Mammary epithelial cell (primary cell): ENCODE measurements at regions of chr10 and their contacts with region 1.

Region 1: DNA sequence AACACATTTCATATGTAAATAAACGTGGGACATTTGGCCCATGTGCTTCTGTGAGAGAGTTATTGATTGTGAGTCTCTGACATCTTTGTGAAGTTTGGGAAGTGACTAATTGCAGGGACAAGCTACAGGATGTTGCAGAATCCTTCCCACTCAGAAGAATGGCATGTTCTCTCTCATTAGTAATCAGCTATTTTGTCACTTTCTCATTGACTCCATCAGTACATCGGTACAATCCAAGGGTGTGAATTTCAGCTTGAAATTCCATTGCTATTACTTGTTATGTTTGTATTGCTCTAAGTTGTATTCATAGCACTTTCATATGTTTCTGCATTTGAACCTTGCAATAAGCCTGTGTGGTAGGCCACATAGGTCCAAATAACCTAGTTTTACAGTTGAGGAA is 100.0 kb upstream of the KCNMA1 start:
- DNase-seq: peak; percentile 95
- H3K4me3 ChIP-seq: no peak overlapping the region
- H3K27ac ChIP-seq: peak overlapping the region; percentile 96
- H3K4me1 ChIP-seq: peaks cover 17% of the 10 kb centered on the region
- H3K27me3 ChIP-seq: no peaks in the 10 kb centered on the region
- CTCF ChIP-seq: no peak

Region 2: GRCh38 chr10:76743169-76743568 is 994.4 kb before region 1 on chr10:
- CTCF ChIA-PET with region 1: no interaction called
- dilution Hi-C with region 1: no loop called
- in situ Hi-C with region 1: no loop called
- intact Hi-C with region 1: no loop called
- DNase-seq: no peak
- H3K4me3 ChIP-seq: no peak overlapping the region
- H3K27ac ChIP-seq: no peak overlapping the region
- H3K4me1 ChIP-seq: no peaks in the 10 kb centered on the region
- H3K27me3 ChIP-seq: peaks cover 5% of the 10 kb centered on the region
- CTCF ChIP-seq: no peak

Region 3: GRCh38 chr10:77673101-77673500 is 64.5 kb before region 1 on chr10:
- CTCF ChIA-PET with region 1: no interaction called
- dilution Hi-C with region 1: no loop called
- in situ Hi-C with region 1: no loop called
- intact Hi-C with region 1: no loop called
- DNase-seq: peak; percentile 29
- H3K4me3 ChIP-seq: no peak overlapping the region
- H3K27ac ChIP-seq: no peak overlapping the region
- H3K4me1 ChIP-seq: no peaks in the 10 kb centered on the region
- H3K27me3 ChIP-seq: no peaks in the 10 kb centered on the region
- CTCF ChIP-seq: no peak

Region 4: DNA sequence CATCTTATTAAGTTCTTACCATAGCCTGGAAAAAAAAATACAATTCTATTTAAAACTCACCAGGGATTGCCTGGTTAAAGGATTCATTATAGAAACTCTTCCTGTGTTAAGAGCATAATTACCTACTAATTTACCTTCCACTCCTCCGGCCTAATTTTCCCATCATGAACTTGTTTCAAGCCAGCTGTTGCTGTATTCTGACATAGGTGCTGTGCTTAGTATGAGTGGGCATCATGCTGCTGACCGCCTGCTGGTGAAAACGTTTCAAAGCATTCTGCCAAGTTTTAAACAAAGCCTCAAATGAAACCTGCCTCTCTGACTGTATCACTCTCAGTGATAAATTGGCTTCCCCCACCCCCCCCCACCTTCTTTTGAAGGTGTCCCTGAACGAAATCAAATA is 52.2 kb before region 1 on chr10:
- CTCF ChIA-PET with region 1: no interaction called
- dilution Hi-C with region 1: no loop called
- in situ Hi-C with region 1: no loop called
- intact Hi-C with region 1: no loop called
- DNase-seq: no peak
- H3K4me3 ChIP-seq: no peak overlapping the region
- H3K27ac ChIP-seq: no peak overlapping the region
- H3K4me1 ChIP-seq: no peaks in the 10 kb centered on the region
- H3K27me3 ChIP-seq: no peaks in the 10 kb centered on the region
- CTCF ChIP-seq: no peak

Region 5: DNA sequence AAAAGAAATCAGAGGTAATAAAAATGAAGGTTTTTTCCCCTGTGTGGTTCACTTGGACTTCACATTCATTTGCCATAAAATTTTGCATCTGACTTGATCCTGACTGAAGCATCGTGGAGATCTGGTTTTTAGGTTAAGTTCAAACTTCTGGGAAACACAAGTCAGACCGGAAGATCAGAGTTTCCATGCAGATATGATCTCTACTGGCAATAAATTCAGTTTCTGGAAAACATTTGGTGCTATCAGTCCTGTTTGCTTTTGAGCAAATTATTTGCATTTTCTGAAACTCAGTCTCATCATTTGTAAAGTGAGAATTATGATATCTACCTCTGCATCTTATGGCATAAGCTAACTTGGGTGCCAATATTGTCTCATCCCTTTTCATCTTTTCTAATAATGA is 18.7 kb before region 1 on chr10:
- CTCF ChIA-PET with region 1: no interaction called
- dilution Hi-C with region 1: no loop called
- in situ Hi-C with region 1: no loop called
- intact Hi-C with region 1: loop called (anchors 2 kb)
- DNase-seq: no peak
- H3K4me3 ChIP-seq: no peak overlapping the region
- H3K27ac ChIP-seq: no peak overlapping the region
- H3K4me1 ChIP-seq: peaks cover 9% of the 10 kb centered on the region
- H3K27me3 ChIP-seq: no peaks in the 10 kb centered on the region
- CTCF ChIP-seq: no peak

Region 6: GRCh38 chr10:77774940-77775391 is 37.4 kb after region 1 on chr10:
- CTCF ChIA-PET with region 1: no interaction called
- dilution Hi-C with region 1: no loop called
- in situ Hi-C with region 1: no loop called
- intact Hi-C with region 1: no loop called
- DNase-seq: no peak
- H3K4me3 ChIP-seq: no peak overlapping the region
- H3K27ac ChIP-seq: no peak overlapping the region
- H3K4me1 ChIP-seq: peaks cover 6% of the 10 kb centered on the region
- H3K27me3 ChIP-seq: no peaks in the 10 kb centered on the region
- CTCF ChIP-seq: no peak